ENCODE measurements at regions of chr1 and their contacts with region 1.

Region 1: GRCh38 chr1:2412519-2413233 is at the start of gene PEX10:
- DNase-seq: peak; percentile 97 to 100 (median 99)
- ATAC-seq: peak; percentile 91
- H3K4me3 ChIP-seq: peak within 1 kb of the TSS; percentile 64 to 89
- H3K4me3 Mint-ChIP-seq: peak within 1 kb of the TSS; percentile 86
- H3K27ac ChIP-seq: peak within 1 kb of the TSS; percentile 81 to 93
- H3K27ac Mint-ChIP-seq: peak within 1 kb of the TSS; percentile 93
- H3K4me1 ChIP-seq: peaks cover 53% of the 10 kb centered on the region
- H3K4me1 Mint-ChIP-seq: peaks cover 40% of the 10 kb centered on the region
- H3K27me3 ChIP-seq: no peaks in the 10 kb centered on the region
- H3K27me3 Mint-ChIP-seq: no peaks in the 10 kb centered on the region
- CTCF ChIP-seq: no peak
- total RNA-seq, gene PEX10: 11.6 to 11.8 TPM

Region 2: GRCh38 chr1:1919304-1920056 is 493.2 kb before region 1 on chr1:
- CTCF ChIA-PET with region 1: no interaction called
- POLR2A ChIA-PET with region 1: no interaction called
- intact Hi-C with region 1: loop called in 1 of 2 experiments (anchors 5 kb)
- DNase-seq: peak; percentile 97 to 100 (median 99)
- ATAC-seq: peak; percentile 89
- H3K4me3 ChIP-seq: peak overlapping the region; percentile 39 to 74
- H3K4me3 Mint-ChIP-seq: peak overlapping the region; percentile 47
- H3K27ac ChIP-seq: peak overlapping the region in 1 of 2 experiments; percentile 28
- H3K27ac Mint-ChIP-seq: peak overlapping the region; percentile 5
- H3K4me1 ChIP-seq: peaks cover 17% of the 10 kb centered on the region
- H3K4me1 Mint-ChIP-seq: peaks cover 3% of the 10 kb centered on the region
- H3K27me3 ChIP-seq: no peaks in the 10 kb centered on the region
- H3K27me3 Mint-ChIP-seq: no peaks in the 10 kb centered on the region
- CTCF ChIP-seq: no peak

Region 3: DNA sequence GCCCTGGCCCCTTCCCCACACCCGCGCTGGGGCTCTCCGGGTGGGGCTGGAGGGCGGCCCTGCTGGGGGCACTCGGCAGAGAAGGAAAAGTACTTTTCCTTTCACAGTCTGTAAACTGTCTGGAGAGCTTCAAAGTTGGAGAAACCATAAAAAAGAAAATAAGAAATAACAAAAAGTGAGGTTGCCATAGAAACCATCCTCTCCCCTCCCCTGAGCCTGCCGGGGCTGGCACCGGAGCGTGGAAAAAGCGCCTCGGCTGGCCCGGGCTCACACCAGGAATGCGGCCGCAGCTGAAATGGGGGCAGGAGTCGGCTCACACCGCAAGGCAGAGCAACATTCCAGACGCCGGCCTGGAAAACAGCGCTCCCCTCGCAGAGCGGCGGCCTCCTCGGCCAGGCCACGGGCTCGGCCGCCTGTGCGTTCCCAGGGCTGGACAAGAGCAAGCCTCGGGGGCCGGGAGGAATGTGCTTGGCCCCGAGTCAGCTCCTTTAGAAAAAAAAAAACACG is 90.6 kb before region 1 on chr1:
- CTCF ChIA-PET with region 1: no interaction called
- POLR2A ChIA-PET with region 1: no interaction called
- intact Hi-C with region 1: no loop called
- DNase-seq: peak in 1 of 9 experiments; percentile 44
- ATAC-seq: peak; percentile 10
- H3K4me3 ChIP-seq: no peak overlapping the region
- H3K4me3 Mint-ChIP-seq: no peak overlapping the region
- H3K27ac ChIP-seq: no peak overlapping the region
- H3K27ac Mint-ChIP-seq: no peak overlapping the region
- H3K4me1 ChIP-seq: peaks cover 33% of the 10 kb centered on the region
- H3K4me1 Mint-ChIP-seq: peaks cover 11% of the 10 kb centered on the region
- H3K27me3 ChIP-seq: peaks cover 0 to 5% of the 10 kb centered on the region in 2 experiments
- H3K27me3 Mint-ChIP-seq: peaks cover 6% of the 10 kb centered on the region
- CTCF ChIP-seq: no peak

Region 4: DNA sequence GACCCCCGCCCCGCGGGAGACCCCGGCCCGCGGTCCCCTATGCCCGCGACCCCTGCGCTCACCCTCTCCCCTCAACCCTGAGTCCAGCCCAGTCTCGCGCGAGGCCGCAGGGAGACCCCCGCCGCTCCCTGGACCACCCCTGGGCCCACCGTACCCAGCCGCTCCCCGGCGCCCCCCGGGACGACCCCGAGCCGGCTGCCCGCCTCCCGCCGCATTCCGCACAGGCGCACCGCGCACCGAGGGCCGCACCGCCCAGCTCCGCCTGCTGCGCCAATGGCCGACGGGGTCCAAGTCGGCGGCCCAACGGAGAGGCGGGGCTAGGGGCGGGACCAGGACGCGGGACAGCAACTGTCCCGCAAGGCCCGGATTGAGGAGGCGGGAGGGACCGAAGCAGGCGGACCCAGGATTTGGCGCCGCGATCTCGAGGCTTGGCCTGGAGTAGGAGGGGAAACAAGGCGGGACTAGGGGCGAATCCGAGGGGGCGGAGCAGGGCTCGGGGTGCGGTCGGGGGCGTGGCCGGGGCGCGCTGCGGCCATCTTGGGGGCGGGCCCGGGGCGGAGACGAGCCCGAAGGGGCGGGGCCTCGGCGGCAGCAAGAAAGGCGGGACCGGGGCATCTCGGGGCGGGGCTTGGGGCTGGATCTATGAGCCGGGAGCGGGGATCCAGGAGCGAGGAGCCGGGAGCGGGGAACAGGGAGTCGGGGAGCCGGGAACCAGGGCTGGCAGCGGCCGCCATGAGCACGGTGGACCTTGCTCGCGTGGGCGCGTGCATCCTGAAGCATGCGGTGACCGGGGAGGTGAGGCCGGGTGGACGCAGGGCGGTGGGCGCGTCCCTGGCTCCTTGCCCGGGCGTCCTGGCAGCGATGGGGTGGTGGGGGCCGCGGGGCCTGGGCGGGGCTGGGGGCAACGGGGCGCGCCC is 173.7 kb after region 1 on chr1 and contains the start of gene PRXL2B:
- CTCF ChIA-PET with region 1: interaction called, 3 read pairs
- POLR2A ChIA-PET with region 1: interaction called, 4 read pairs
- intact Hi-C with region 1: loop called (anchors 1 kb)
- DNase-seq: peak; percentile 94 to 99 (median 97)
- ATAC-seq: peak; percentile 69
- H3K4me3 ChIP-seq: peak within 1 kb of the TSS; percentile 79 to 95
- H3K4me3 Mint-ChIP-seq: peak within 1 kb of the TSS; percentile 93
- H3K27ac ChIP-seq: peak within 1 kb of the TSS; percentile 95 to 98
- H3K27ac Mint-ChIP-seq: peak within 1 kb of the TSS; percentile 99
- H3K4me1 ChIP-seq: peaks cover 37% of the 10 kb centered on the region
- H3K4me1 Mint-ChIP-seq: peaks cover 40% of the 10 kb centered on the region
- H3K27me3 ChIP-seq: no peaks in the 10 kb centered on the region
- H3K27me3 Mint-ChIP-seq: no peaks in the 10 kb centered on the region
- CTCF ChIP-seq: no peak
- total RNA-seq, gene PRXL2B: 13.5 to 15.9 TPM

Region 5: GRCh38 chr1:2840036-2840809 is 427.5 kb after region 1 on chr1:
- CTCF ChIA-PET with region 1: no interaction called
- POLR2A ChIA-PET with region 1: no interaction called
- intact Hi-C with region 1: loop called (anchors 1 kb)
- DNase-seq: peak; percentile 42 to 86 (median 68)
- ATAC-seq: peak; percentile 90
- H3K4me3 ChIP-seq: peak overlapping the region in 1 of 2 experiments; percentile 21
- H3K4me3 Mint-ChIP-seq: peak overlapping the region; percentile 76
- H3K27ac ChIP-seq: peak overlapping the region; percentile 18 to 63
- H3K27ac Mint-ChIP-seq: peak overlapping the region; percentile 81
- H3K4me1 ChIP-seq: peaks cover 17% of the 10 kb centered on the region
- H3K4me1 Mint-ChIP-seq: peaks cover 20% of the 10 kb centered on the region
- H3K27me3 ChIP-seq: no peaks in the 10 kb centered on the region
- H3K27me3 Mint-ChIP-seq: no peaks in the 10 kb centered on the region
- CTCF ChIP-seq: peak; percentile 54

Region 6: DNA sequence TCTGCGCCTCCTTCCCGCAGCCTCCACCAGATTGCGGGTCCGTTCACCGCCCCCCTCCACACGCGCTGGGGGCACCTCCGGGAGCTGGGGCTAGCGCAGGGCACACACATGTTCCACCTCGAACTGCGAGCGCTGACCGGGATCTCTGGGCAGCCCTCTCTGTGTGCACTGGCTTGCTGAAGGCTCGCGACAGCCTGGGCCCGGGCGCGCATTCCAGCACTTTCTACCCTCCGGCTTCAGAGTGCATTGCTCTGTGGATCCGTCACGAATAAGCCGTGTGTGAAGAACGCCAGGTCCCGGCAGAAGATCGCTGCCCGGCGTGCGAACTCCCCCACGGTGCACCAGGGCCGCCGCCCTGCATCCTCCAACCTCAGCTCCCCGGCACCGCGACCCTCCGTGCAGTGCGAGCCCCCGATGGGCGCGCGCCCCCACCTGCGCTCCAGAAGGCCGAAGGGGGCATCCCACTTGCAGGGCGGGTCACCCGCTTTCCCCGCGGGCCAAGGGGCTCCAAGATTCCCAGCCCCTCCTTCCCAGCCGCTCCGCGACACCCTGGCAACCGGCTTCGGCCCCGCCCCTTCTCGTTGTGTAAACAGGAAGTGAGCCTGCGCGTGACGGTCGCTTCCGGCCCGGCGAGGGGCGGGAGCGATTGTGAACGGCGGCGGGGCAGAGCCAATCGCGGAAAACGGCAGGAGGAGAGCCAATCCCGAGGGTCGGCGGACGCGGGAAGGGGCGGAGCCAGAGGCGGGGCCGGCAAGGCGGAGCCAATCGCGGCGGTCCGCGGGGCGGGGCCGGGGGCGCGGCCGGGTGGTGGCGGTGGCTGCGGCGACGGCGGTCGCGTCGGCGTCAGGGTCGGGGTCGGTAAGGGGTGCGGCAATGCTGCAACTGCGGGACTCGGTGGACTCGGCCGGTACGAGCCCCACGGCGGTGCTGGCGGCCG is 1211.8 kb after region 1 on chr1 and contains the start of gene TPRG1L:
- CTCF ChIA-PET with region 1: no interaction called
- POLR2A ChIA-PET with region 1: no interaction called
- intact Hi-C with region 1: loop called in 1 of 2 experiments (anchors 10 kb)
- DNase-seq: peak; percentile 97 to 99 (median 98)
- ATAC-seq: peak; percentile 93
- H3K4me3 ChIP-seq: peak within 1 kb of the TSS; percentile 72 to 100
- H3K4me3 Mint-ChIP-seq: peak within 1 kb of the TSS; percentile 98
- H3K27ac ChIP-seq: peak within 1 kb of the TSS; percentile 61 to 89
- H3K27ac Mint-ChIP-seq: peak within 1 kb of the TSS; percentile 98
- H3K4me1 ChIP-seq: peaks cover 29% of the 10 kb centered on the region
- H3K4me1 Mint-ChIP-seq: peaks cover 40% of the 10 kb centered on the region
- H3K27me3 ChIP-seq: no peaks in the 10 kb centered on the region
- H3K27me3 Mint-ChIP-seq: no peaks in the 10 kb centered on the region
- CTCF ChIP-seq: no peak
- total RNA-seq, gene TPRG1L: 39.0 to 39.8 TPM